PC-9 (cell line): ENCODE measurements at regions of chr6 and their contacts with region 1.

Region 1: GRCh38 chr6:133487174-133487573 is 246.0 kb downstream of the EYA4 start:
- DNase-seq: no peak
- H3K4me3 ChIP-seq: no peak overlapping the region
- H3K27ac ChIP-seq: no peak overlapping the region
- H3K4me1 ChIP-seq: no peaks in the 10 kb centered on the region
- H3K27me3 ChIP-seq: no peaks in the 10 kb centered on the region
- CTCF ChIP-seq: no peak

Region 2: GRCh38 chr6:133326584-133326983 is 160.6 kb before region 1 on chr6:
- CTCF ChIA-PET with region 1: no interaction called
- POLR2A ChIA-PET with region 1: interaction called, 10 read pairs
- intact Hi-C with region 1: no loop called
- DNase-seq: no peak
- H3K4me3 ChIP-seq: no peak overlapping the region
- H3K27ac ChIP-seq: no peak overlapping the region
- H3K4me1 ChIP-seq: no peaks in the 10 kb centered on the region
- H3K27me3 ChIP-seq: no peaks in the 10 kb centered on the region
- CTCF ChIP-seq: no peak

Region 3: DNA sequence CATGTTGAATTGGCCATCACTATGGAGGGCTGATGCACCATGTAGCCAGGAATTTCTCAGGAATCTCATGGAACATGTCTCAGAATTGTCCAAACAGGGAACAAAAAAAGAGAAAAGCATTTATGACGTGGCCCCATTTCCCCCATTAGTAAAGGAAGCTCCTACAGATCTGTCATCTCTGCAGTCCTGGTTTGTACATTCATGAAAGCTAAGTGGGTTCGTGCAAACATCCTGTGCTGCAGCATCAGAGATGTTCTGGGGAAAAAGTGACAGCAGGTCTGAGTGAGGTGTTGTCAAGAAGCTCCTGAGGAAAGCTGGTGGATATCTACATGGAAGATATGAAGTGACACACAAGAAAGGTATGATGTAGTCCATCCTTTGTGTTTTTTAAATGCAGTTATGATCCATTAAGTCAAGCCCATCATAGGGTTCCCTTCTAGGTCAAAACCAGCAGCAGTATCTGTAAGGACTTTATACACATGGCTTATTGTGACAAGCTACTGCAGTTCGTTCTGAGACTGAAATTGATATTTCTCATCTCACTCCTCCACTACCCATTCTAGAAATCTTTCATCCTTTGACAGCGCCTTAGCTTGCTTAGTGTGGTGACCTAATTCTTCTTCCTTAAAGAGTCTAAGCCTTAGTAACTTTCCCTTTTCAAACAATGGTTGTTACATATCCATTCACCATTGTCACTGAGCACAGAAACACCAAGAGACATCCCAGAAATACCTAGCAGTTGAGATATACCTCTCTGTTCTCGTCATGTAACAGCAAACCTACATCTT is 201.7 kb after region 1 on chr6:
- CTCF ChIA-PET with region 1: no interaction called
- POLR2A ChIA-PET with region 1: no interaction called
- intact Hi-C with region 1: no loop called
- DNase-seq: no peak
- H3K4me3 ChIP-seq: no peak overlapping the region
- H3K27ac ChIP-seq: no peak overlapping the region
- H3K4me1 ChIP-seq: no peaks in the 10 kb centered on the region
- H3K27me3 ChIP-seq: no peaks in the 10 kb centered on the region
- CTCF ChIP-seq: no peak